ENCODE measurements at regions of chr2 and their contacts with region 1.

Region 1: DNA sequence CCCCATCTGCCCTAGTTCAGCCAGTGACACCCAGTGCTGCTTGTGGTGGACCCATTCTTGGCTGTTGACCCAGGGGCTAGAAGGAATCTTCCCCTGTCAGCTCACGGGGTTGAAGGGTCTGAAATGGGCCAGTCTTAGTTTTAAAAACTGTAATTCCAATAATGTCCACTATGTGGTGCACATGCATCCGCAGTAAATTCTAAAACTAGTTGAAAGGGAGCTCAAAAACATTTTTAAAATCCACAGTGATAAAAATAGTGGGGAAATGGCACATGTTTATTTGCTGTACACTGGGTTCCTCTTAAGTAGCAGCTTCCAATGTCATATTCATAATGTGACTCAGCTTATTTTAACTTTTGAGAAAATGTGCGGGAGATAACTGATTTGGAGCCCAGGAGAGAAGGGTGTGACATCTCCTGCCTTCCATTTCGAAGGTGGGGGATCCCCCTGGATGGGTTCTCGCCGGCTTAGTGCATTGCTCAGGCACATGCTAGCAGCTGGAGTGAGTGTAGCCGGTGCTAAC is 32.8 kb downstream of the GRHL1 start:
- DNase-seq: no peak
- H3K4me3 ChIP-seq: no peak overlapping the region
- H3K27ac ChIP-seq: no peak overlapping the region
- H3K27me3 ChIP-seq: no peaks in the 10 kb centered on the region
- CTCF ChIP-seq: peak; percentile 65

Region 2: GRCh38 chr2:9941196-9941995 is 42.9 kb before region 1 on chr2:
- CTCF ChIA-PET with region 1: interaction called, 12 read pairs
- POLR2A ChIA-PET with region 1: no interaction called
- DNase-seq: peak; percentile 51
- H3K4me3 ChIP-seq: no peak overlapping the region
- H3K27ac ChIP-seq: peak overlapping the region; percentile 40
- H3K27me3 ChIP-seq: peaks cover 5% of the 10 kb centered on the region
- CTCF ChIP-seq: no peak

Region 3: DNA sequence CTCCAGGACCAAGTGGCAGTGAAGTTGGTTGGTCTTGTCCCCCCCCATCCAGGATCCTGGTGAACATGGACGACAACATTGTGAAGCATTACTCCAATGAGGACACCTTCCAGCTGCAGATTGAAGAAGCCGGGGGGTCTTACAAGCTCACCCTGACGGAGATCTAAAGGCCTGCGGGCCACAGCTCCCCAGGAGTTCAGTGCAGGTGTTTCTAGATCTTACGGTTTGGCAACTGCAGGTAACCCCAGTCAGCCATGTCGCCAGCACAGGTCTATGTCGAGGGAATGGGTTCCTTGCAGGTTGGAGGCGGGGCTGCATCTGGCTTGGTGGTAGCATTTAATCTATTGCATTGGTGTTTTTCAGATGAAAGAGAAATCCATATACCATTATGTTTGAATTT is 16.3 kb after region 1 on chr2:
- CTCF ChIA-PET with region 1: interaction called, 41 read pairs
- POLR2A ChIA-PET with region 1: no interaction called
- DNase-seq: no peak
- H3K4me3 ChIP-seq: no peak overlapping the region
- H3K27ac ChIP-seq: no peak overlapping the region
- H3K27me3 ChIP-seq: no peaks in the 10 kb centered on the region
- CTCF ChIP-seq: no peak

Region 4: GRCh38 chr2:10036095-10036884 is 52.0 kb after region 1 on chr2:
- CTCF ChIA-PET with region 1: interaction called, 15 read pairs
- POLR2A ChIA-PET with region 1: no interaction called
- DNase-seq: no peak
- H3K4me3 ChIP-seq: no peak overlapping the region
- H3K27ac ChIP-seq: no peak overlapping the region
- H3K27me3 ChIP-seq: no peaks in the 10 kb centered on the region
- CTCF ChIP-seq: peak; percentile 56

Region 5: DNA sequence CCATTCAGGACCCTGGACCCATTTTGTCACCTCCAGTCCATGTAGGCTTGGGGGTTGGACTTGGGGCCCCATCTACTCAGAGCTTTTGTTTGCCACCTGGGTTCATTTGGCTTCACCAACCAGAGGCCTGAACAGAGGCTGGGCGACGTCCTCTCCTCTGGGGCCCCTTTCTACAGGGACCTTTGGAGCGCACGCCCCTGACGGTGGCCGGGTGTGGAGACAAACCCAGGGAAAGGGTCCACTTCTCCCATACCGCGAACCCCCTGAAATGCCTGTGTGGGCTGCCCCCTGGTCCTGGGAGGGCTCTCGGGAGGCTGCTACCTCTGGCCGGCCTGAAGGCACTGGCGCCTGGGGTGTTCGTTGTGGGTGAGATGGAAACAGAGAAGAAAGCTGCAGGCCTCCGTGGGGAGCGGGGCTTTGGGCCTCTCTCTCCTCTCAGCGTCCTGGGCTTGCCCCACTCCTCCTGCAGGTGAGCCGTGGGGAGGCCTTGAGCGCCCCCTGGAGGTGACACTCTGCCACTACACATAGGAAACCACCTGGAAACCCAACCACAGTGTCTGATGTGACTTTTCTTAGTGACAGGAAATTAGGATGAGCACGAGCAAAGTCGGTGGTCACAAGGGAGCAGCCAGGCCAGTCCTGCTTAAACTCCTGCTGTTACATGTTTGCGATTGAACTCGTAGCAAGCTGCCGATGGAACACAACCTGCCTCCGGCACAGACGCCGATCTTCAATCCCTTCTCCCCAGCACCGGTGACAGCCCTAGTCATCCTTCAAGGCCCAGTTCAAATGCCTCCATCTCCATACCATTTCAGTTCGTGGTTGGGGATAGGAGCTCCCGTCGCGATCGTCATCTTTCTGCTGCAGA is 1697.7 kb after region 1 on chr2:
- CTCF ChIA-PET with region 1: no interaction called
- POLR2A ChIA-PET with region 1: no interaction called
- DNase-seq: no peak
- H3K4me3 ChIP-seq: no peak overlapping the region
- H3K27ac ChIP-seq: no peak overlapping the region
- H3K27me3 ChIP-seq: peaks cover 44% of the 10 kb centered on the region
- CTCF ChIP-seq: peak; percentile 83

Measured in AG04450 (cell line).